Sigmoid colon (tissue), 7 donors: ENCODE measurements at regions of chr10 and their contacts with region 1.

Region 1: GRCh38 chr10:124152916-124153826 is 59.8 kb upstream of the CHST15 start:
- DNase-seq: peak; percentile 75
- H3K4me3 ChIP-seq: no peak overlapping the region
- H3K27ac ChIP-seq: peak overlapping the region; percentile 77 to 80 (median 77)
- H3K4me1 ChIP-seq: peaks cover 0 to 67% (median 57%) of the 10 kb centered on the region in 4 donors
- H3K27me3 ChIP-seq: no peaks in the 10 kb centered on the region
- CTCF ChIP-seq: no peak
- EP300 ChIP-seq: peak in 1 of 4 donors; percentile 4
- POLR2A ChIP-seq: no peak

Region 2: DNA sequence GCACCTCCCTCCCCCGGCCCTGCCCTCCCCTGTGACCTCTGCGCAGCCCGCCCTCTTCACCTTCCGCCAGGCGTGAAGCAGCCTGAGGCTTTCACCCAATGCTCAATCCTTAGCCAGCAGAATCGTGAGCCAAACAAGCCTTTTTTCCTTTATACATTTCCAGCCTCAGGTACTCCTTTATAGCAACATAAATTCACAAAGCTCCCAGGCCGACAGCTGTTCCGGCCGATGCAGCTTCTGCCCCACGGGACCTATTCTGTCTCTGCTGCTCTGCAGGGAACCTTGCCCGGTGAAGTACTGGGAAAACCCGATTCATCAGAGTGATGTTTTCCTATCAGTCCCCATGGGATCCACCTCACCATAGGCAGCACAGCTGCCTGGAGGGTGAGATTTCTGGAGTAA is 147.2 kb before region 1 on chr10:
- intact Hi-C with region 1: loop called (anchors 5 kb)
- DNase-seq: peak; percentile 90
- H3K4me3 ChIP-seq: no peak overlapping the region
- H3K27ac ChIP-seq: peak overlapping the region; percentile 85 to 90 (median 89)
- H3K4me1 ChIP-seq: peaks cover 0 to 74% (median 69%) of the 10 kb centered on the region in 4 donors
- H3K27me3 ChIP-seq: no peaks in the 10 kb centered on the region
- CTCF ChIP-seq: no peak
- EP300 ChIP-seq: peak in 1 of 4 donors; percentile 15
- POLR2A ChIP-seq: no peak

Region 3: GRCh38 chr10:124106241-124106879 is 46.8 kb before region 1 on chr10:
- intact Hi-C with region 1: loop called (anchors 5 kb)
- DNase-seq: peak; percentile 93
- H3K4me3 ChIP-seq: peak overlapping the region in 1 of 4 donors; percentile 2
- H3K27ac ChIP-seq: peak overlapping the region; percentile 82 to 84 (median 83)
- H3K4me1 ChIP-seq: peaks cover 0 to 37% (median 34%) of the 10 kb centered on the region in 4 donors
- H3K27me3 ChIP-seq: no peaks in the 10 kb centered on the region
- CTCF ChIP-seq: no peak
- EP300 ChIP-seq: no peak
- POLR2A ChIP-seq: no peak